Left ventricle myocardium superior (tissue), 1 donor: ENCODE measurements at regions of chr14 and their contacts with region 1.

Region 1: DNA sequence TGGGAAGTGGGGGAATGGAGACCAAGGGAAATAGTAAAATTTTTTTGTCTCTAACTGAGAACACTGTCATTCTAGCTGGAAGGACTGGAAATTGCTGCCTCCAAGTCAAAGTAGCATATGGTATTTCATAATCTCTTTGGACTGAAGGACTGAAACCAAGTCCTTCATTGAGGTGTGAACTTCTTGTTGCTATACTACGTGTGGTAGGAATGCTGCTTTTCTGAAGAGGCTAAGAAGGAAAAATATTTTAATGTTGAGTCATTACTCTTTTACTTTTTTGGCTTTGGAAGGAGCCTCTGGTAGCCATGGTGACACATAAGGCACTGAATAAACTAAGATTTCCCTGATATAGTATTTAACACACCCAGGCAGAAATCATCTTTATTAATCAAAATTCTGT is 465.4 kb downstream of the NPAS3 start:
- DNase-seq: no peak
- ATAC-seq: no peak

Region 2: DNA sequence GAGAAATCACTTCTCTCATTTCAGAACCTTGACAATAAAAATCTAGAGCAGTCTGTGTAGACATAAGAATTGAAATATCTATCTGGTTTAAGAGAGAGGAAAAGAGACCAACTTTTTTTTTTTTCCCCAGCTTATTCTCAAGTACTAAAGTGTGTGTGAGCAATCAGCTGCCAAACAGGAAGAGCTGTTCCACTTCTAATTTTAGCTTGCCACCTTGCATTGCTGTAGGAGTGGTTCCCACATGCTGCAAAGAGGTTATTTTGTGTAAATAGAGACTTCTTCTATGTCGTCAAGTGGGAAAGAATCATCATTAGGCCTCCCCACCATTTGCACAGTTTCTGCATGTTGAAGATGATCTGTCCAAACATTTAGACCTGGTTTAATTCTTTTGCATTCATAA is 322.8 kb before region 1 on chr14:
- intact Hi-C with region 1: loop called (anchors 5 kb)
- DNase-seq: no peak
- ATAC-seq: peak; percentile 52

Region 3: GRCh38 chr14:33229269-33229929 is 174.7 kb before region 1 on chr14:
- intact Hi-C with region 1: no loop called
- DNase-seq: no peak
- ATAC-seq: no peak

Region 4: GRCh38 chr14:33249233-33249820 is 154.7 kb before region 1 on chr14:
- intact Hi-C with region 1: no loop called
- DNase-seq: no peak
- ATAC-seq: no peak

Region 5: DNA sequence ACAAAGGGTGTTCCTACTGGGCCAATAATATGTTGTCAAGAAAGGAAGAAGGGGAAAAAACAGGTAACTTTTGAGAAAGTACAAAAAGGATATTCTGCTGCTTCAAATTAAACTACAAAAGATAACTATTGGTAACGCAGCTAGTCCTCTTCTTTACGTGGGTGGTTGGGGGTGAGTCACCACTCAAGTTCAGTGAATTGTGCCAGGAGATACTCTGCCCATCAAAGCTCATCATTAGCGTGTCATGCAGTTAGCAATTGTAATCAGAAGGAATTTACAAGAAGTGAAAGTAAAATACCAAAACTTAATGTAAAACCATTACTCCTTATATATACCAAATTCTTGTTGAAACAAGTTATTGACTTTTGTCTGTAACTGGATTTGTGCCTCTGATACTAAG is 123.4 kb before region 1 on chr14:
- intact Hi-C with region 1: no loop called
- DNase-seq: no peak
- ATAC-seq: no peak

Region 6: DNA sequence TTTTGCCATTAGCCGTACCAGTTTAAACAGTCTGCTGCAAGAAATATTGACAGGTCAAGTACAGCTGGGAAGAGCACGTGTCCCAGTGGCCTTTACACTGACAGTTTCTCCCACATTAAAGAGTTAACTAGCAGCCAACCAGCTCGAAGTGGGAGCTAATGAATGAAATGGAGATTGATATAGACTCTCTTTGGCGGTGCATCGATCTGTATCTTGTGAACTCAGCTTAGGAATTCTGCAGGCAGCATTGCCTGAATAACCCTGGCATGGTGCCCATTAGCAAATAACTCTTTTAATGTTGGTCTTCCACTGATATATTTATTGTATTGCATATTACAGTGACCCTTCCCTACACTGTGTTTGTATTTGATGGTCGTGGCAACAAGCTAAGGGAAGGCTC is 227.4 kb after region 1 on chr14:
- intact Hi-C with region 1: no loop called
- DNase-seq: no peak
- ATAC-seq: no peak